ENCODE measurements at regions of chr7 and their contacts with region 1.

Region 1: DNA sequence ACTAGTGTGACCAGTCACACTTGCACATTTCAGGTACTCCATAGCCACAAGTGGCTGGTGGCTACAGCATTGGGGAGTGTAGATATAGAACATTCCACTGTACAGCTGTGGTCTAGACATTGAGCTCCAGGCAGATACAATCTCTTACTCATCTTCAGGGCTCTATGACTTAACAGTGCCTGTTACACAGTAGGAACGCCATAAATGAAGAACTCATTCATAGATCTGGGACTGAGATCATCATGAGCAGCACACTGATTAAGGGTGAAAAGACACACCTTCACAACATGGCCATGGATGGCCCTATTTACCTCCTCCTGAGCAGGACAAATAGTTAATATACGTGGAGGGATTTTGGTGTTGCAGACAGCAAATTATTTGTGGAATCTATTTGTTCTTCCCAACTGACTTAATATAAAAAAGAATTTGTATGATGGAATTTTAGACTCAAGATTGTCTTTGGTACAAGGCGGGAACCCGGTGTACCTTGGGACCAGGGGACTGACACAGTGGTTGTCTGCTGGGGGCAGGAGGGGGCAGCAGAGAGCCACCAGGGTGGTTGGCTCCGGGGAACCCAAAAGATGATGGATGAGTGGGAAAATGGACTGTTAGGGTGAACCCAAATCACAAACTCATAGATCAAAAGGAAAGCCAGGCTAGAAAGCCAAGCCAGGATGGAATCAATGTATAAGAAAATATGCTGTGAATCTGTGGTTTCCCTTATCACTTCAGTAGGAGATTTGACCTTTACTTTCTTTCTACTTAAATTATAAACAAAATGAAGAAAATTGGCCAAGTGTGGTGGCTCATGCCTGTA is 24.3 kb upstream of the CPA2 start:
- DNase-seq: peak; percentile 73
- H3K4me3 Mint-ChIP-seq: no peak overlapping the region
- H3K27ac Mint-ChIP-seq: no peak overlapping the region
- H3K4me1 Mint-ChIP-seq: peaks cover 12% of the 10 kb centered on the region
- H3K27me3 Mint-ChIP-seq: peaks cover 4% of the 10 kb centered on the region

Region 2: GRCh38 chr7:130135208-130136205 is 106.9 kb before region 1 on chr7:
- CTCF ChIA-PET with region 1: no interaction called
- POLR2A ChIA-PET with region 1: no interaction called
- intact Hi-C with region 1: no loop called
- DNase-seq: no peak
- H3K4me3 Mint-ChIP-seq: no peak overlapping the region
- H3K27ac Mint-ChIP-seq: no peak overlapping the region
- H3K4me1 Mint-ChIP-seq: peaks cover 14% of the 10 kb centered on the region
- H3K27me3 Mint-ChIP-seq: no peaks in the 10 kb centered on the region

Region 3: DNA sequence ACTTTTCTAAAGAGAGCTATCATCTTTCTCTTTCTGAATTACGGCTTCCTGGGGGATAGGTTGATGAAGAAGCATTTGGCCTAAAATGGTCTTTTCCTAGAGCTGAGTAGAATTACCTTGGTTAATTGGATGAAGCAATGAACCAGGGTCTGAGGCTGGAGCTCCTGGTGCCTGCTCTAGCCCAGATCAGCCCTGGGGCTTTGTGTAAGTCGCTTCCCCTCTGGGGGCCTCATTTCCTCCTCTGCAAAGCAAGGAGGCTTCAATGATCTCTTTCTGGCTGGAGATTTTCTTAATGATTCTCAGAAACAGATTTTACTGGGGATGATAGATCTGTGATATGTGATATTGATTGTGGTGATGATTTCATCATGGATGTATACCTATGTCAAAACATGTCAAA is 20.7 kb after region 1 on chr7:
- CTCF ChIA-PET with region 1: no interaction called
- POLR2A ChIA-PET with region 1: no interaction called
- intact Hi-C with region 1: no loop called
- DNase-seq: no peak
- H3K4me3 Mint-ChIP-seq: no peak overlapping the region
- H3K27ac Mint-ChIP-seq: no peak overlapping the region
- H3K4me1 Mint-ChIP-seq: no peaks in the 10 kb centered on the region
- H3K27me3 Mint-ChIP-seq: no peaks in the 10 kb centered on the region

Region 4: GRCh38 chr7:130305433-130306042 is 63.1 kb after region 1 on chr7:
- CTCF ChIA-PET with region 1: no interaction called
- POLR2A ChIA-PET with region 1: no interaction called
- intact Hi-C with region 1: no loop called
- DNase-seq: no peak
- H3K4me3 Mint-ChIP-seq: no peak overlapping the region
- H3K27ac Mint-ChIP-seq: no peak overlapping the region
- H3K4me1 Mint-ChIP-seq: no peaks in the 10 kb centered on the region
- H3K27me3 Mint-ChIP-seq: peaks cover 7% of the 10 kb centered on the region

Region 5: GRCh38 chr7:130419658-130420057 is 177.3 kb after region 1 on chr7:
- CTCF ChIA-PET with region 1: no interaction called
- POLR2A ChIA-PET with region 1: no interaction called
- intact Hi-C with region 1: loop called (anchors 10 kb)
- DNase-seq: no peak
- H3K4me3 Mint-ChIP-seq: no peak overlapping the region
- H3K27ac Mint-ChIP-seq: no peak overlapping the region
- H3K4me1 Mint-ChIP-seq: peaks cover 46% of the 10 kb centered on the region
- H3K27me3 Mint-ChIP-seq: no peaks in the 10 kb centered on the region

Region 6: GRCh38 chr7:130486114-130486958 is 243.9 kb after region 1 on chr7:
- CTCF ChIA-PET with region 1: interaction called, 5 read pairs
- POLR2A ChIA-PET with region 1: no interaction called
- intact Hi-C with region 1: loop called (anchors 2 kb)
- DNase-seq: peak; percentile 65
- H3K4me3 Mint-ChIP-seq: peak overlapping the region; percentile 63
- H3K27ac Mint-ChIP-seq: no peak overlapping the region
- H3K4me1 Mint-ChIP-seq: peaks cover 17% of the 10 kb centered on the region
- H3K27me3 Mint-ChIP-seq: peaks cover 56% of the 10 kb centered on the region

Region 7: DNA sequence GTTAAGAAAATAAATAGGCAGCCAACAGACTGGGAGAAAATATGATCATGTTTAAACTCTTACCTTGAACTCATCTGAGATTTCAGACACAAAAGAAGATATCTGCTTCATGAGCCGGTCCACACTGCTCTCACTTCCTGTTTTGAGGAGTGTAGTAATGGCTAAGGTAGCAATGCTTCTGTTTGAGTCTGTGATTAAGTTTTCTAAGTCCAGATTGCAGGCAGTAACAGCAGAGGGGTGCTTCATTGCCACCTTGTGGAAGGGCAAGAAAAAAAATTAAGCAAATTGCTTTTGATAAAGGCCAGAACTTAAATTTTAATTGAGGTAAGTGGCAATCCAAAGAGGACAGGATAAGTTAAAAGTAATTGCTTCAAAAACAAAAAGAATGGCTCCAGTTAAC is 318.6 kb after region 1 on chr7:
- CTCF ChIA-PET with region 1: no interaction called
- POLR2A ChIA-PET with region 1: no interaction called
- intact Hi-C with region 1: loop called (anchors 2 kb)
- DNase-seq: no peak
- H3K4me3 Mint-ChIP-seq: no peak overlapping the region
- H3K27ac Mint-ChIP-seq: no peak overlapping the region
- H3K4me1 Mint-ChIP-seq: no peaks in the 10 kb centered on the region
- H3K27me3 Mint-ChIP-seq: no peaks in the 10 kb centered on the region

Region 8: GRCh38 chr7:130758429-130759056 is 516.1 kb after region 1 on chr7:
- CTCF ChIA-PET with region 1: interaction called, 49 read pairs
- POLR2A ChIA-PET with region 1: no interaction called
- intact Hi-C with region 1: loop called (anchors 1 kb)
- DNase-seq: no peak
- H3K4me3 Mint-ChIP-seq: no peak overlapping the region
- H3K27ac Mint-ChIP-seq: no peak overlapping the region
- H3K4me1 Mint-ChIP-seq: no peaks in the 10 kb centered on the region
- H3K27me3 Mint-ChIP-seq: peaks cover 7% of the 10 kb centered on the region

Region 9: DNA sequence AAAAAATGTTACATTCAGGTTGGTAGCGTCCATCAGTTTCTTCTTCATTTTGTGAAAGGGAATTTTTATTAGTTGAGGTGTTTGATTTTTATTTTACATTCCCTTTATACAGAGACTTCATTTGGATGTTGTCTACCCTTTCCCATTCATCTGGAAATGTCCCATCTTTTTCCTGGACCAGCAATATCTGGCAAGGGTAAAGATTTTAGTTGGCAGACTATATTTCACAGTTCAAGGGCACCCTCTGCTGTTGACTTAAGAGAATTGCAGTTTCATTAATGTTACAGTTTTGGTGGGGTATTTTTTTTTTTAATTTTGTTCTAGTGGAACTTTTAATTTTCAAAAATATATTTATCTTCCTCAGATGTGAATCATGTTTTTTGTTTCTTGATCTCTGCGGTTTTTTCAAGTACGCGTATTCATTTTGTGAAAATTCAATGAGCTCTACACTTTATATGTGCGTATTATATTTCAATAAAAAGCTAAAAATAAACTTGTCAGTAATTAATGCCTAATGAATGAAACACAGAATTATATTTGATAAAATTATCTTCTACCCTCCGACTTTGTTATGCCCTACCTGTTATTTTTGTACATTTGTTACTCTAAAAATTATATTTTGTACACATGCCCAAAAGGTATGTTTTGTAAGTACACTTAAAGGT is 589.5 kb after region 1 on chr7:
- CTCF ChIA-PET with region 1: interaction called, 7 read pairs
- POLR2A ChIA-PET with region 1: no interaction called
- intact Hi-C with region 1: loop called (anchors 1 kb)
- DNase-seq: no peak
- H3K4me3 Mint-ChIP-seq: no peak overlapping the region
- H3K27ac Mint-ChIP-seq: no peak overlapping the region
- H3K4me1 Mint-ChIP-seq: no peaks in the 10 kb centered on the region
- H3K27me3 Mint-ChIP-seq: peaks cover 23% of the 10 kb centered on the region

Measured in activated CD4-positive, alpha-beta memory T cell treated with anti-CD3 and anti-CD28 coated beads for 36 hours (primary cell).